AG04449 (cell line): ENCODE measurements at regions of chr7 and their contacts with region 1.

Region 1: GRCh38 chr7:100803398-100804233 is 23.7 kb downstream of the EPHB4 start:
- DNase-seq: peak; percentile 49
- H3K4me3 ChIP-seq: no peak overlapping the region
- CTCF ChIP-seq: no peak

Region 2: GRCh38 chr7:100208911-100209408 is 594.7 kb before region 1 on chr7:
- CTCF ChIA-PET with region 1: no interaction called
- POLR2A ChIA-PET with region 1: no interaction called
- DNase-seq: no peak
- H3K4me3 ChIP-seq: no peak overlapping the region
- CTCF ChIP-seq: no peak

Region 3: DNA sequence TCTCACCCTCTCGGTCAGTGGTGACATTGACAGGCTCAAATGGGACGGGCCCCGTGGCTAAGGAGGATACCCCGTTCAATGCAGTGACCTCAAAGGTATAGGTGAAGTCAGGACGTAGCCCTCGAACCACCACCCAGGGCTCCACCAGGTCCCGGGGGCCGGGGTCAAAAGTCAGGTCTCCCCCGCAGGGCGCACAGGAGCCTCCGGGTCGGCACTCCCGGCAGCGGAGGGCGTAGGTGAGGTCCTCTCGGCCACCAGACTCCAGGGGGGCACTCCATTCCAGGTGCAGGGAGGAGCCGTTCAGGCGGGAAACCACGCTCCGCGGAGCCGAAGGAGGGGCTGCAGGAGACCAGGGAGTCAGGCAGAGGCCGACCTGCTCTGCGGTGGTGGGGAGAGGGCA is 15.9 kb after region 1 on chr7:
- CTCF ChIA-PET with region 1: interaction called, 20 read pairs
- POLR2A ChIA-PET with region 1: interaction called, 3 read pairs
- DNase-seq: no peak
- H3K4me3 ChIP-seq: no peak overlapping the region
- CTCF ChIP-seq: no peak

Region 4: GRCh38 chr7:100827330-100828227 is 24.0 kb after region 1 on chr7 and contains the start of gene EPHB4:
- CTCF ChIA-PET with region 1: interaction called, 10 read pairs
- POLR2A ChIA-PET with region 1: interaction called, 7 read pairs
- DNase-seq: no peak
- H3K4me3 ChIP-seq: peak within 1 kb of the TSS; percentile 74
- CTCF ChIP-seq: peak; percentile 61

Region 5: GRCh38 chr7:101066141-101066832 is 262.7 kb after region 1 on chr7:
- CTCF ChIA-PET with region 1: no interaction called
- POLR2A ChIA-PET with region 1: no interaction called
- DNase-seq: no peak
- H3K4me3 ChIP-seq: no peak overlapping the region
- CTCF ChIP-seq: no peak